Posterior vena cava (tissue), 2 donors: ENCODE measurements at regions of chr1 and their contacts with region 1.

Region 1: DNA sequence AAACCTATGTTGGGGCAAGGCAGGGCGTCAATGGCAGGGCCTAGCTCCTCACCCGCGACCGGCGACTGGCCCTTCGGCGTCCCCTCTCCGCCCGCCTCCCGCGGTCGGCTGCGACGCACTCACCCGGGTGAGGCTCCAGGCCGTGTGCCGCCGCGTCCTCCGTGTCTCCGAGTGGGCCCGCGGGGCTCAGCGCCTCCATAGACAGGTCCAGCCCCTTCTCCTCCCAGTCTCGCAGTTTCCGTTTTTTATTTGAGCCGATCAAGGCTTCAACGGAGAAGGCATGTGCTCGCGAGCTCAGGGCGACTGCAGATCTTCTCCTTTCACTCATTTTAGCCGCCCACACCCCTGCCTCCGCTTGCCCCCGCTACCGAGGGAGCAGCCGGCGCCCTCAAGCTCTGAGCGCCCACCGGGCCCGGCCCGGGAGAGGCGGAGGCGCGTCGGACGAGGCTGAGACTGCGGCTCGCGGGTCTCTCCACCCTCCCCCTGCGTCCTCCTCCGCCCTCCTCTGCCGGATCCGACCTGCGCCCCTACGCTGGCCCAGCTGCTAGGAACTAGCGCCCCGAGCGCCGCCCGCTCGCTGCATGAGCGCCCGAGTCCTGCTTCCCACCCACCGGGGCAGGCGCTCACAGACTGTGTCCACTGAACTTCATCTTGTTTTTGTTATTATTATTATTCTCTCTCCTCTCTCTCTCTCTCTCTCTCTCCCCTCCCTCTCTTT is 516 bp downstream of the TBX15 start:
- DNase-seq: no peak

Region 2: GRCh38 chr1:118247593-118247992 is 740.0 kb before region 1 on chr1:
- intact Hi-C with region 1: no loop called
- DNase-seq: no peak

Region 3: GRCh38 chr1:118751166-118751565 is 236.5 kb before region 1 on chr1:
- intact Hi-C with region 1: loop called in 1 of 2 experiments (anchors 10 kb)
- DNase-seq: no peak

Region 4: GRCh38 chr1:119732465-119733168 is 745.0 kb after region 1 on chr1:
- intact Hi-C with region 1: loop called in 1 of 2 experiments (anchors 5 kb)
- DNase-seq: no peak